WTC11 (cell line): ENCODE measurements at regions of chr9 and their contacts with region 1.

Region 1: DNA sequence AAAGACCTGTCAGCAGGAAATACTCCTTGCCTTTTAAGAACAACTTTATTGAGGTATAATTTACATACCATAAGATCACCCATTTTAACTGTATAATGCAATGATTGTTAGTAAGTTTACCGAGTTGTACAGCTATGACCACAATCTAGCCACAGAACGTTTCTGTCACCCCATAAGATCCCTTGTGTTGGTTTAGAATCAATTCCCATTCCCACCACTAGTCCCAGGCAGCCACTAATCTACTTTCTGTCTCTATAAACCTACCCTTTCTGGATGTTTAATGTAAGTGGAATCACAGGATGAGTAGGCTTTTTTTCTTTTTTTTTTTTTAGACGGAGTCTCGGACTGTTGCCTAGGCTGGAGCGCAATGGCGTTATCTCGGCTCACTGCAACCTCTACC is 4.4 kb downstream of the GPR107 start:
- DNase-seq: no peak
- ATAC-seq: no peak
- H3K4me3 Mint-ChIP-seq: no peak overlapping the region
- H3K27ac Mint-ChIP-seq: no peak overlapping the region
- H3K4me1 Mint-ChIP-seq: peaks cover 10% of the 10 kb centered on the region; the same call in 1 of the 2 replicates
- H3K27me3 Mint-ChIP-seq: no peaks in the 10 kb centered on the region
- CTCF ChIP-seq: 0 out of 2 replicates have a peak, but pooled peaks have one; percentile 4

Region 2: GRCh38 chr9:130072515-130073229 is 14.5 kb after region 1 on chr9:
- CTCF ChIA-PET with region 1: interaction called, 14 read pairs
- POLR2A ChIA-PET with region 1: interaction called, 9 read pairs
- DNase-seq: no peak
- ATAC-seq: no peak
- H3K4me3 Mint-ChIP-seq: no peak overlapping the region
- H3K27ac Mint-ChIP-seq: peak overlapping the region; percentile 78
- H3K4me1 Mint-ChIP-seq: peaks cover 8% of the 10 kb centered on the region
- H3K27me3 Mint-ChIP-seq: no peaks in the 10 kb centered on the region
- CTCF ChIP-seq: no peak

Region 3: GRCh38 chr9:130156672-130157071 is 98.5 kb after region 1 on chr9:
- CTCF ChIA-PET with region 1: no interaction called
- POLR2A ChIA-PET with region 1: no interaction called
- DNase-seq: no peak
- ATAC-seq: peak; percentile 21; the same call in 1 of the 2 replicates
- H3K4me3 Mint-ChIP-seq: no peak overlapping the region
- H3K27ac Mint-ChIP-seq: no peak overlapping the region
- H3K4me1 Mint-ChIP-seq: peaks cover 16% of the 10 kb centered on the region
- H3K27me3 Mint-ChIP-seq: no peaks in the 10 kb centered on the region
- CTCF ChIP-seq: no peak

Region 4: GRCh38 chr9:130186839-130187522 is 128.8 kb after region 1 on chr9:
- CTCF ChIA-PET with region 1: no interaction called
- POLR2A ChIA-PET with region 1: no interaction called
- DNase-seq: peak; percentile 65
- ATAC-seq: peak; percentile 85
- H3K4me3 Mint-ChIP-seq: 0 out of 2 replicates have a peak overlapping the region, but pooled peaks have one; percentile 8
- H3K27ac Mint-ChIP-seq: peak overlapping the region; percentile 52
- H3K4me1 Mint-ChIP-seq: peaks cover 31% of the 10 kb centered on the region
- H3K27me3 Mint-ChIP-seq: no peaks in the 10 kb centered on the region
- CTCF ChIP-seq: no peak